Activated T-helper 1 cell treated with anti-CD3 and anti-CD28 coated beads, Interleukin-12 subunit alpha, Interleukin-12 subunit beta, Interleukin-2, Interleukin-4 antibody, amounts not matched to agents 30 ng/mL and 10 ng/mL and 1 ng/mL, durations not matched to agents 14 hours and 24 hours and 36 hours (primary cell): ENCODE measurements at regions of chr17 and their contacts with region 1.

Region 1: DNA sequence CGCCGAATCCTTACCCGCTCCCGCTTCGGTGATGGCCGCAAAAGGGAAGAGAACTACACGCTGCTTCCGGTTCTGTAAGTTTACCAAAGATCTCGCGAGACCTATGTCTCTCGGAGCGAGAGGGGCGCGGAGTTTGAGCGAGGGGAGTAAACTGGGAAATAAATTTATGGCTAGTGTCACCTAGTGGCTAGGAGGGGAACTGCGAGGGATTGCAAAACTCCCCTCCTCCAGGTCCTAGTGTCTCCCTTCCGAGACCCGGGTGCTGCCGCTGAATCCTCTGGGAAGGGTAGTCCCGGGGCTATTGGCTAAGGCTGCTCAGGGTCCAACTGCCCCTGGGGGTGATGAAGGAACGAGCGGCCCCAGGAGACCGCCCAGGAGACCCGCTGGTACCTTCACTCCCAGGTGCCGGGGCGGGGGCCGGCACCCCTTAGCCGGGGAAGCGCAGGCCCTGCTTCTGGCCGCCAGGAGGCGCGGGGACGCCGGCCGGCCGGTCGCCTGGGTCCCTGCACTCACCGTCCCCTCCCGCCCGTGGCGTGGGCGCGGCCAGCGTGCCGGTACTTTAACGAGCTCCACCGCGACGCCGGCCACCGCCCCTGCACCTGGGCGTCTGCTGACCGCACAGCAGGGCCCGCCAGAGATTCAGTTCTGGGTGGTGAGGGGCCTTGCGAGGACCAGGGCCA is at the start of gene RPL26:
- DNase-seq: peak; percentile 94
- H3K4me3 Mint-ChIP-seq: peak within 1 kb of the TSS; percentile 90
- H3K27ac Mint-ChIP-seq: peak within 1 kb of the TSS; percentile 87
- H3K4me1 Mint-ChIP-seq: peaks cover 42% of the 10 kb centered on the region
- H3K27me3 Mint-ChIP-seq: no peaks in the 10 kb centered on the region
- total RNA-seq, gene RPL26: 2,163 and 2,185 TPM in 2 replicates

Region 2: GRCh38 chr17:8248751-8249607 is 134.3 kb before region 1 on chr17 and contains the start of gene PFAS:
- intact Hi-C with region 1: loop called (anchors 2 kb)
- DNase-seq: peak; percentile 95
- H3K4me3 Mint-ChIP-seq: peak within 1 kb of the TSS; percentile 98
- H3K27ac Mint-ChIP-seq: peak within 1 kb of the TSS; percentile 100
- H3K4me1 Mint-ChIP-seq: peaks cover 40% of the 10 kb centered on the region
- H3K27me3 Mint-ChIP-seq: peaks cover 1% of the 10 kb centered on the region
- total RNA-seq, gene PFAS: 189 and 204 TPM in 2 replicates

Region 3: DNA sequence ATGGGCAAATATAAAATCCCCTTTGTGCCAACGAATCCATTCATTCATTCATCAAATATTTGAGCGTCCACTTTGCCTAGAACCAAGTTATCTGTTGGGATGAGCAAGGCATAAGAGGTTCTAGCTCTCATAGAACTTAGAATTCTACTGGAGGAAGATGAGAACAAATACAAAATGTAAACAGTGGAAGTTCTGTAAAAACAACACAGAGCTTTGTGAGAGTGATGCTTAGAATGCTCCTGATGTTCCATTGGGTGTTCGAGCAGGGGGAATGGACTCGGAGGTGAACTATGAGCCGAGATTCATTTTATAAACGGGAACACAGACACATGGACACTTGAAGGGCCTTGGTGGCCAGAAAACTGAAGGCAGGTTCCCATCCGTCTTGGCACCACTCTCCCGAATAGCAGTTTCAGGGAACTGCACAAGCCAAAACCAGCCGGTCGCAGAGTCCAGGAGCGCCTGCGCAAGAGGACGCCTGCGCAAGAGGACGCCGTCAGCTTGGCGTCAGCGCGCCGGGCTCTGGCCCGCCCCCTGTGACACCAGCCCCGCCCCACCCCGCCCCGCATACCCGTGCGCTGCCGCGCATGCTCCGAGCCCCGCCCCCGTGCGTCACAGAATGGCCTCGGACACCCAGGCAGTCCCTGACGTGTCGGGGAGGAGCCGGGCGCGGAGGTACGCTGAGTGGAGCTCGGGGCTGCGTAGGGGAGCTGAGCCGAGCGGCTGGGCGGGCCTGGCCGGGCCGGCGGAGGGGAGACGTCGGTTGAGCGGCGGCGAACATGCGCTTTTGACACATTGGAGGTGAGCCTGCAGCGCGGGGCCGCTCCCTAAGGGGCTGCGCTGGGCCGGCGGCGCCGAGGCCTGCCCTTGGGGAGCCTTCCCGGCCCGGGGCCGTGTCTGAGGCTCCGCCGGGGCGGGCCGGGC is 52.2 kb after region 1 on chr17 and contains the start of gene NDEL1:
- intact Hi-C with region 1: loop called (anchors 1 kb)
- DNase-seq: peak; percentile 98
- H3K4me3 Mint-ChIP-seq: peak within 1 kb of the TSS; percentile 88
- H3K27ac Mint-ChIP-seq: peak within 1 kb of the TSS; percentile 92
- H3K4me1 Mint-ChIP-seq: peaks cover 14% of the 10 kb centered on the region
- H3K27me3 Mint-ChIP-seq: no peaks in the 10 kb centered on the region
- total RNA-seq, gene NDEL1: 72.4 and 75.4 TPM in 2 replicates

Region 4: GRCh38 chr17:8745586-8746500 is 362.6 kb after region 1 on chr17:
- intact Hi-C with region 1: loop called (anchors 1 kb)
- DNase-seq: peak; percentile 63
- H3K4me3 Mint-ChIP-seq: peak overlapping the region; percentile 87
- H3K27ac Mint-ChIP-seq: peak overlapping the region; percentile 75
- H3K4me1 Mint-ChIP-seq: peaks cover 13% of the 10 kb centered on the region
- H3K27me3 Mint-ChIP-seq: peaks cover 6% of the 10 kb centered on the region